ENCODE measurements at regions of chr3 and their contacts with region 1.

Region 1: DNA sequence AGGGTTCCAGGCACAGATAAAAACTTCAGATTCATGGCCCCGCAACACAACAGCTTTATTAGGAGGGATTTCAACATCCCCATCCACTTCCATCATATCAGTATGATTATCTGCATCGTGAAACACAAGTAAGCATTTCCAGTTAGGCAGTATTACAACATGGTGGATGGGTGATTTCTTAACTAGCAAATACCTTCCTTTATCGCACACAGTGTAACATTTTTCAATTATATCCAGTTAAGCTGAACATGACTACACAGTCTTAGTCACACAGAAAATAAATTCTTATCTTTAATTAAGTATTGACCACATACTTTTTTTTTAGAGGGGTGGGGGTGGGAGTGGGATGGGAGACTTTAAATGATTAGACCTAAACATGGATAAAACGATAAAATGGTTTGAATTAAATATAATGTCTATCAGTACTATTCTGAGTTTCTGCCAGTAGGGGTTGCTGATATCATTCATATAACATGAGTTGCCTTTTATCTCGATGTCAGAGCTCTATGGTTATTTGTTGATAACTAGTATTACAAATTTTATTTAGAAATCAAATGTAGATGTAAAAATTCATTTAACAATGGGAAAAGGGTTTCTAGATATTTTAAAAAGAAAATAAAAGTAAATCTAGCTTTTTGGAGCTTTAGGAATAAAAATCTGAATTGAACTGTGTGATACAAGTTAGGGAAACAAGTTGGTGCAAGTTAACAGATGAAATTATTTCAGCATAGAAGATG is 146.6 kb downstream of the TBL1XR1 start:
- DNase-seq: no peak
- H3K4me3 ChIP-seq: no peak overlapping the region
- H3K27ac ChIP-seq: no peak overlapping the region
- H3K4me1 ChIP-seq: peaks cover 0 to 18% (median 0%) of the 10 kb centered on the region in 3 donors
- H3K27me3 ChIP-seq: no peaks in the 10 kb centered on the region
- CTCF ChIP-seq: peak; percentile 46 to 83 (median 66)
- POLR2A ChIP-seq: no peak

Region 2: DNA sequence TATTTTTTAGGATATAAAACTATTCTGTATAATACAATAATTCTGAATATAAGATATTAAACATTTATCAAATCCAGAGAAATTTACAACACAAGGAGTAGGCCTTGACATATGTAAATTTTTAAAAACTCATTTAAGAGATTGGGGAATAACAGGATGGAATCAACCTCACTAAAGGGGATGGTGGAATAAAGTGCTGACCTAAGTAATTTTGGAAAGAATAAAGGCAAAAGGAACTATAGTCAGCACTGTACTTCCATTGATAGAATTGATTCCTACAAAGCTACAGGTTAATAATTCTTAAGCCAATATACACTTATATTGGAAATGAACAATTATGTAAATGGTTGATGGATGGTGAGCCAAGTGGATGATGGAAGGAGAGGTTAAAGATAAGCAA is 402.7 kb before region 1 on chr3:
- intact Hi-C with region 1: no loop called
- DNase-seq: no peak
- H3K4me3 ChIP-seq: no peak overlapping the region
- H3K27ac ChIP-seq: no peak overlapping the region
- H3K4me1 ChIP-seq: no peaks in the 10 kb centered on the region
- H3K27me3 ChIP-seq: no peaks in the 10 kb centered on the region
- CTCF ChIP-seq: no peak
- POLR2A ChIP-seq: no peak

Region 3: GRCh38 chr3:177126015-177126773 is 75.5 kb after region 1 on chr3:
- intact Hi-C with region 1: no loop called
- DNase-seq: no peak
- H3K4me3 ChIP-seq: no peak overlapping the region
- H3K27ac ChIP-seq: peak overlapping the region in 2 of 4 donors; percentile 44 to 58
- H3K4me1 ChIP-seq: peaks cover 0 to 70% (median 4%) of the 10 kb centered on the region in 3 donors
- H3K27me3 ChIP-seq: no peaks in the 10 kb centered on the region
- CTCF ChIP-seq: no peak
- POLR2A ChIP-seq: no peak

Region 4: GRCh38 chr3:177197041-177197727 is 146.5 kb after region 1 on chr3 and contains the start of gene TBL1XR1:
- intact Hi-C with region 1: loop called (anchors 10 kb)
- DNase-seq: peak; percentile 51
- H3K4me3 ChIP-seq: peak within 1 kb of the TSS; percentile 93 to 99 (median 98)
- H3K27ac ChIP-seq: peak within 1 kb of the TSS; percentile 97 to 100 (median 100)
- H3K4me1 ChIP-seq: peaks cover 13 to 76% (median 23%) of the 10 kb centered on the region in 3 donors
- H3K27me3 ChIP-seq: no peaks in the 10 kb centered on the region
- CTCF ChIP-seq: no peak
- POLR2A ChIP-seq: no peak
- total RNA-seq, gene TBL1XR1: 66.0 to 79.8 (median 72.4) TPM

Region 5: GRCh38 chr3:177359593-177360357 is 309.1 kb after region 1 on chr3:
- intact Hi-C with region 1: loop called (anchors 5 kb)
- DNase-seq: peak; percentile 69
- H3K4me3 ChIP-seq: peak overlapping the region; percentile 18 to 65 (median 41)
- H3K27ac ChIP-seq: peak overlapping the region; percentile 86 to 96 (median 94)
- H3K4me1 ChIP-seq: peaks cover 32 to 78% (median 52%) of the 10 kb centered on the region in 3 donors
- H3K27me3 ChIP-seq: no peaks in the 10 kb centered on the region
- CTCF ChIP-seq: peak in 2 of 6 experiments; percentile 21 to 22
- POLR2A ChIP-seq: peak in 2 of 4 donors; percentile 54 to 60